Endothelial cell of umbilical vein (primary cell): ENCODE measurements at regions of chr10 and their contacts with region 1.

Region 1: GRCh38 chr10:53580465-53580864 is 807.9 kb upstream of the MBL2 start:
- DNase-seq: peak; percentile 7
- H3K4me3 ChIP-seq: no peak overlapping the region
- H3K27ac ChIP-seq: peak overlapping the region; percentile 77
- H3K4me1 ChIP-seq: peaks cover 25% of the 10 kb centered on the region
- H3K27me3 ChIP-seq: no peaks in the 10 kb centered on the region
- CTCF ChIP-seq: no peak
- POLR2A ChIP-seq: no peak

Region 2: DNA sequence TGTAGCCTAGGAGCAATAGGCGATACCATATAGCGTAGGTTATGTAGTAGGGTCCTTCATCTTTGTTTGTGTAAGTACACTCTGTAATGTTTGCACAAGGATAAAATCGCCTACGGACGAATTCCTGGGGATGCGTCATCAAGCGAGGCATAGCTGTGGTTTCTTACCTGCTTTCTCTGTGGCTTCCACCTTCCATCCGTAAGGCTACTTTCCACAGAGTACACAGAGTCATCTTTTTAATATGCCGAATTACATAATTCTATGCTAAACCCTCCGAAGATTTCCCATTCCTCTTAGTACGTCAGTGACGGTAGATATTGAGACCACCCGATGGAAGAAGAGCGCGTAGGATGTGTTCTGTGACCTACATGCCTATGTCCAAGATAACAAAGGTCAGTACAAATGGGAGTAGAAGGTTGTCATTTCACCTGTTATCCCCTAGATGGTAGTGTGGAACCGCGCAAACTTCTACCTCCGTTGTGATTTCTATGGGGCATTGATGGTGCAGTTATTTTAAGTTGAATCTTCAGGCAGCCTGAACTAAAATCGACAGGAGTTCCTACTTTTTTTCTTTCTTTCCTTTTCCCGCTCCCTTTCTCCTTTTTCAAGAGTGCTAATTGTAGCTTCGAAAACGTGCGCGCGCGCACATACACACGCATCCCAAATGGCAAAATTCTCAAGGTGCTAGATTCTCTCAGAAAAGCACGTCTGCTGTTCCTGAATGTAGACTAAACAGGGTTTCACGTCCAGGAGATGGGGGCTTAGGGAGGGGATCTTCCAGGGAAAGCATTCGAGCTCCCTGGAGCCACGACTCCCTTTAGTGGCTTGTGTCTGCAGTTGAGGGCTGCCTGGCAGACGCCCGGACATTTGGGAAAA is 696.2 kb before region 1 on chr10:
- CTCF ChIA-PET with region 1: no interaction called
- POLR2A ChIA-PET with region 1: no interaction called
- dilution Hi-C with region 1: no loop called
- intact Hi-C with region 1: loop called (anchors 5 kb)
- DNase-seq: peak; percentile 67
- H3K4me3 ChIP-seq: no peak overlapping the region
- H3K27ac ChIP-seq: no peak overlapping the region
- H3K4me1 ChIP-seq: peaks cover 17% of the 10 kb centered on the region
- H3K27me3 ChIP-seq: peaks cover 0 to 6% of the 10 kb centered on the region in 2 experiments
- CTCF ChIP-seq: peak; percentile 70 to 72
- POLR2A ChIP-seq: no peak

Region 3: DNA sequence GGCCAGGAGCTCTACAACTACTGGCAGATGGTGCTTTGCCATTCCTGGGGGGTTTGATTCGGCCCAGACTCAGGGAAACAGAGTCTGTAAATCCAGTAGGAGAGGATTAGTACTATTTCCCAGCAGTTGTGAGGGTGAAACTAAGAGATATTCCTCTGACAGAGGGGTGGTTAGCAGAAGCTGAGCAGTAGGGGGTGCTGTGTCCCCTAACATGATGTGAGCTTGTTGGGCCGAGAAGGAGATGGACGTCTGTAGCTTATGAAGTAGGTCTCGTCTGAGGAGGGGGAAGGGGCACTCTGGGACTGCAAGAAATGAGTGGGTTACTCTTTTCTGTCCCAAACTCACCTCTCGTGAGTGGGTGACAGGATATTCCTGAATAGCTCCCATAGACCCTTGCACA is 628.6 kb before region 1 on chr10:
- CTCF ChIA-PET with region 1: no interaction called
- POLR2A ChIA-PET with region 1: no interaction called
- dilution Hi-C with region 1: no loop called
- intact Hi-C with region 1: loop called (anchors 5 kb)
- DNase-seq: peak; percentile 73
- H3K4me3 ChIP-seq: no peak overlapping the region
- H3K27ac ChIP-seq: no peak overlapping the region
- H3K4me1 ChIP-seq: no peaks in the 10 kb centered on the region
- H3K27me3 ChIP-seq: no peaks in the 10 kb centered on the region
- CTCF ChIP-seq: peak; percentile 55 to 71
- POLR2A ChIP-seq: no peak

Region 4: GRCh38 chr10:53135213-53135896 is 445.1 kb before region 1 on chr10:
- CTCF ChIA-PET with region 1: no interaction called
- POLR2A ChIA-PET with region 1: no interaction called
- dilution Hi-C with region 1: no loop called
- intact Hi-C with region 1: loop called (anchors 10 kb)
- DNase-seq: no peak
- H3K4me3 ChIP-seq: no peak overlapping the region
- H3K27ac ChIP-seq: no peak overlapping the region
- H3K4me1 ChIP-seq: peaks cover 17% of the 10 kb centered on the region
- H3K27me3 ChIP-seq: peaks cover 10 to 21% of the 10 kb centered on the region in 2 experiments
- CTCF ChIP-seq: no peak
- POLR2A ChIP-seq: no peak

Region 5: GRCh38 chr10:53403688-53404087 is 176.8 kb before region 1 on chr10:
- CTCF ChIA-PET with region 1: no interaction called
- POLR2A ChIA-PET with region 1: no interaction called
- dilution Hi-C with region 1: no loop called
- intact Hi-C with region 1: loop called (anchors 1 kb)
- DNase-seq: peak; percentile 96
- H3K4me3 ChIP-seq: no peak overlapping the region
- H3K27ac ChIP-seq: peak overlapping the region; percentile 42
- H3K4me1 ChIP-seq: peaks cover 20% of the 10 kb centered on the region
- H3K27me3 ChIP-seq: no peaks in the 10 kb centered on the region
- CTCF ChIP-seq: no peak
- POLR2A ChIP-seq: no peak

Region 6: DNA sequence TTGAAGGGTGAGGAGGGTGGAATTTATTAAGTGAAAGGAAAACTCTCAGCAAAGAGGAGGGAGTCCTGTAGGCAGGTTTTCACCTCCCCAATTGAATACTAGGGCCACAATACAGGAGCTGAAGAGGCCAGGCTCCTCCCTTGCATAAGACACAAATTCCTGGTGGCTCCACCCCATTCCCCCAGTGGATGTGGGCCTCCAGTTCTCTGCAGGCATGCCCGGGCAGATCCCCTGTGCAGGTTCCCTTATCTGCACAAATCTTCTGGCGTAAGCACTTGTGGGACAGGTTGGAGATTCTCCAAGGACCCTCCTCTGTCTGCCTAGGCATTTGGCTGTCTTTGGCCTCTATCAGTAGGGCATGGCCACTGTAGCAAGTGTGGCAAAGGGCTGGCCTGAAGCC is 39.2 kb after region 1 on chr10:
- CTCF ChIA-PET with region 1: no interaction called
- POLR2A ChIA-PET with region 1: no interaction called
- dilution Hi-C with region 1: no loop called
- intact Hi-C with region 1: no loop called
- DNase-seq: no peak
- H3K4me3 ChIP-seq: no peak overlapping the region
- H3K27ac ChIP-seq: no peak overlapping the region
- H3K4me1 ChIP-seq: no peaks in the 10 kb centered on the region
- H3K27me3 ChIP-seq: no peaks in the 10 kb centered on the region
- CTCF ChIP-seq: no peak
- POLR2A ChIP-seq: no peak

Region 7: GRCh38 chr10:53833908-53834307 is 253.4 kb after region 1 on chr10:
- CTCF ChIA-PET with region 1: interaction called, 3 read pairs
- POLR2A ChIA-PET with region 1: no interaction called
- dilution Hi-C with region 1: no loop called
- intact Hi-C with region 1: loop called (anchors 5 kb)
- DNase-seq: no peak
- H3K4me3 ChIP-seq: no peak overlapping the region
- H3K27ac ChIP-seq: no peak overlapping the region
- H3K4me1 ChIP-seq: peaks cover 11% of the 10 kb centered on the region
- H3K27me3 ChIP-seq: no peaks in the 10 kb centered on the region
- CTCF ChIP-seq: no peak
- POLR2A ChIP-seq: no peak

Region 8: DNA sequence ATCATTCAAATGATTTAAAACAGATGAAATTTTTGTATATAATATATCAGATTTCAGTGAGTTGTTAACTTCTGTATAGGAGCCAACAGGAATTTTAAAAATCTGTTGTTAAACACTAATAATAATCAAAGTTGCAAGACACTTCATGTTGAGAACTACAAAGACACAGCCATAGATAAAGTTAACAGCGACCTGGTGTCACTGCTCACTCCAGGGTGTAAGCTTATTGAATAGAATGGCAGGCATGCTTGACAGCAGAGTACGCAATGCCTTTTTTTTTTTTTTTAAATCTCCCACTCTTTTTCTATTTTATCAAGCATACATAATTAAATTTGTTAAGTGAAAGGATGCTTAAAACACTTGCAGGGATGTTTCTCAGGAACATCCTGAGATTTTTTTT is 1188.6 kb after region 1 on chr10:
- CTCF ChIA-PET with region 1: no interaction called
- POLR2A ChIA-PET with region 1: no interaction called
- dilution Hi-C with region 1: no loop called
- intact Hi-C with region 1: no loop called
- DNase-seq: no peak
- H3K4me3 ChIP-seq: no peak overlapping the region
- H3K27ac ChIP-seq: no peak overlapping the region
- H3K4me1 ChIP-seq: no peaks in the 10 kb centered on the region
- H3K27me3 ChIP-seq: no peaks in the 10 kb centered on the region
- CTCF ChIP-seq: no peak
- POLR2A ChIP-seq: no peak